GM12878 (cell line): ENCODE measurements at regions of chr7 and their contacts with region 1.

Region 1: DNA sequence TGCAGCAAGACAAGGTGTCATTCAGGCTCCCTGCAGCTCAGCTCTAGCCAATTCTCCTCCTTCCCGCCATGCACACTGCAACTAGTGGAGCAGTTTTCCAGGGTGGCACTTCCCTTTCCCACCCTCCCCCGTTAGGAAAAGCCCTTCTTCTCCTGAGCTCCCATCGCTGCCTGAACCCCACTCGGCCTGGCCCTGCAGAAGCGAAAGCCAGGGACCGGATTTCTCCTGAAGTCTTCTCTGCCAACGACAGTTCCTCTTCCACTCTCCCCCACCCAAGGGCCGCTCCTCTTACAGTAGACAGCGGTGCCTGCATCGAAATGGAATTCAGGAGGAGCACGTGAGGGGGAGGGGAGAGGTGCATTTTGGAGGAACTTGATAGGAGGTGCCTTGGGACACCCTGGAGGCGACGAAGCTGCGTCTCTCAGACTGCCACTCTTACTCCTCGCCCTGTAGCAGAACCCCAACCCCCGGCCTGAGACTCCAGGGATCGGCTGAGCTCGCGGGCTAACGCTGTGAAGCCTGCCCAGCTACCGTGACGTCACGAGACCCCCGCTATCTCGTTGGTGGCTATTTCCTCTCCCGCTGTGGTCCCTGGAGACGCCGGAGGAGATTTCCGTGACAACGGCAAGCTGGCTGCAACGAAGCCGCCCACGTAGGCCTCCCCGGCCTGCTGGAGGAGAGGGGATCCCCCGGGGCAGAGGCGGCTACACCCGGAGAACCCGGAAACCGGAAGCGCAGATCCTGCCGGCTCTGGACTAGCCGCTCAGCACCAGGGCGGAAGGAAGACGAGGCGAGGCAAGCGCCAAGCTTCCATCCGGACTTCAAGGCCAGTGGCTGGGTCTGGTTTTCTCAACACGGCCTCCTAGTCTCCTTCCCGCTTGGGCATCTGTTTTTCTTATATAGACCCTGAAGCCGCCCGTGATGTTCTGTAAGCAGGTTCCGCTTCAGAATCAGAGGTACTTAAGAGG is 109.7 kb downstream of the RALA start:
- DNase-seq: peak; percentile 95
- ATAC-seq: peak; percentile 93
- H3K4me3 ChIP-seq: peak overlapping the region; percentile 77
- H3K27ac ChIP-seq: peak overlapping the region; percentile 80
- H3K4me1 ChIP-seq: peaks cover 10% of the 10 kb centered on the region
- H3K27me3 ChIP-seq: no peaks in the 10 kb centered on the region
- CTCF ChIP-seq: no peak
- EP300 ChIP-seq: peak; percentile 56 to 79
- POLR2A ChIP-seq: peak; percentile 91
- RAD21 ChIP-seq: peak; percentile 4; the same call in 1 of the 2 replicates

Region 2: GRCh38 chr7:39428221-39428620 is 304.9 kb before region 1 on chr7:
- CTCF ChIA-PET with region 1: no interaction called
- POLR2A ChIA-PET with region 1: no interaction called
- RAD21 ChIA-PET with region 1: no interaction called
- SMC1A ChIA-PET with region 1: no interaction called
- in situ Hi-C with region 1: no loop called
- intact Hi-C with region 1: no loop called
- DNase-seq: no peak
- ATAC-seq: no peak
- H3K4me3 ChIP-seq: no peak overlapping the region
- H3K27ac ChIP-seq: no peak overlapping the region
- H3K4me1 ChIP-seq: no peaks in the 10 kb centered on the region
- H3K27me3 ChIP-seq: no peaks in the 10 kb centered on the region
- CTCF ChIP-seq: no peak
- EP300 ChIP-seq: no peak
- POLR2A ChIP-seq: no peak
- RAD21 ChIP-seq: no peak

Region 3: DNA sequence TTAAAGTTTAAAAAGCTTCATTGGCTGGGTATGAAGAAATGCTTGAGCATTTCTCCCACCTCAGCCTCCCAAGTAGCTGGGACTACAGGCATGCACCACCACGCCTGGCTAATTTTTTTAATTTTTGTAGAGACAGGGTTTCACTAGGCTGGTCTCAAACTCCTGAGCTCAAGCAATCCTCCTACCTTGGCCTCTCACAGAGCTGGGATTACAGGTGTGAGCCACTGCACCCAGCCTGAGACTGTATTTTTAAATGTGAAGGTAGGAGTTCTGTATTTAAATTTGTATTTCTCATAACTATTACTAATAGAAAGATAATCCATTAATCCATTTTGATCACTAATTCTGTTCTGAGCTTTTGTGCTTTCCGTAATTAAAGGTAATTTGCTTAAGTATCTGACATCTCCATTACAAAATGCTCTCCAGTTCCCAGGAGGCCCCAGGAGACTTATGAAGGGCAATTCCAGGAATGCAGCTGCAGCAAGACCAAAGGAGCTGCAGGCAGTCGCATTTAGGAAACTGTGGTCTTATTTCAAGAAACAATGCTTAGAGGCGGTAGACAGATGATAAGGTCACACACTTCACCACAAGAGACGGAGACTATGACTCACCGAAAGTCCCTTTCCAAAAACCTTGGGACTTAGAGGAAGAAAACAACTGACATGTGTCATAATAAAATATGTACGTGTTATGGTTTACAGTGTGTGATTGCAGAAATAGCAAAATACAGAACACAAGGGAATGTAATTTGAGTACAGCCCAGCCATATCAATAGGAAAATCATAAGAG is 143.6 kb before region 1 on chr7:
- CTCF ChIA-PET with region 1: interaction called, 4 read pairs
- POLR2A ChIA-PET with region 1: interaction called, 3 read pairs
- RAD21 ChIA-PET with region 1: interaction called, 5 read pairs
- SMC1A ChIA-PET with region 1: interaction called, 17 read pairs
- in situ Hi-C with region 1: no loop called
- intact Hi-C with region 1: no loop called
- DNase-seq: peak; percentile 45
- ATAC-seq: peak; percentile 94
- H3K4me3 ChIP-seq: no peak overlapping the region
- H3K27ac ChIP-seq: no peak overlapping the region
- H3K4me1 ChIP-seq: peaks cover 5% of the 10 kb centered on the region; the same call in 1 of the 2 replicates
- H3K27me3 ChIP-seq: no peaks in the 10 kb centered on the region
- CTCF ChIP-seq: no peak
- EP300 ChIP-seq: peak; percentile 90 to 96
- POLR2A ChIP-seq: no peak
- RAD21 ChIP-seq: no peak

Region 4: GRCh38 chr7:39686261-39686924 is 46.7 kb before region 1 on chr7:
- CTCF ChIA-PET with region 1: interaction called, 3 read pairs
- POLR2A ChIA-PET with region 1: interaction called, 11 read pairs
- RAD21 ChIA-PET with region 1: interaction called, 5 read pairs
- SMC1A ChIA-PET with region 1: interaction called, 5 read pairs
- in situ Hi-C with region 1: no loop called
- intact Hi-C with region 1: loop called (anchors 1 kb)
- DNase-seq: peak; percentile 47
- ATAC-seq: peak; percentile 94
- H3K4me3 ChIP-seq: no peak overlapping the region
- H3K27ac ChIP-seq: 0 out of 2 replicates have a peak overlapping the region, but pooled peaks have one; percentile 22
- H3K4me1 ChIP-seq: peaks cover 9% of the 10 kb centered on the region
- H3K27me3 ChIP-seq: no peaks in the 10 kb centered on the region
- CTCF ChIP-seq: no peak
- EP300 ChIP-seq: 0 out of 4 replicates have a peak, but pooled peaks of 1 of the 2 experiments have one; percentile 25
- POLR2A ChIP-seq: no peak
- RAD21 ChIP-seq: no peak